Ascending aorta (tissue), 2 donors: ENCODE measurements at regions of chr16 and their contacts with region 1.

Region 1: DNA sequence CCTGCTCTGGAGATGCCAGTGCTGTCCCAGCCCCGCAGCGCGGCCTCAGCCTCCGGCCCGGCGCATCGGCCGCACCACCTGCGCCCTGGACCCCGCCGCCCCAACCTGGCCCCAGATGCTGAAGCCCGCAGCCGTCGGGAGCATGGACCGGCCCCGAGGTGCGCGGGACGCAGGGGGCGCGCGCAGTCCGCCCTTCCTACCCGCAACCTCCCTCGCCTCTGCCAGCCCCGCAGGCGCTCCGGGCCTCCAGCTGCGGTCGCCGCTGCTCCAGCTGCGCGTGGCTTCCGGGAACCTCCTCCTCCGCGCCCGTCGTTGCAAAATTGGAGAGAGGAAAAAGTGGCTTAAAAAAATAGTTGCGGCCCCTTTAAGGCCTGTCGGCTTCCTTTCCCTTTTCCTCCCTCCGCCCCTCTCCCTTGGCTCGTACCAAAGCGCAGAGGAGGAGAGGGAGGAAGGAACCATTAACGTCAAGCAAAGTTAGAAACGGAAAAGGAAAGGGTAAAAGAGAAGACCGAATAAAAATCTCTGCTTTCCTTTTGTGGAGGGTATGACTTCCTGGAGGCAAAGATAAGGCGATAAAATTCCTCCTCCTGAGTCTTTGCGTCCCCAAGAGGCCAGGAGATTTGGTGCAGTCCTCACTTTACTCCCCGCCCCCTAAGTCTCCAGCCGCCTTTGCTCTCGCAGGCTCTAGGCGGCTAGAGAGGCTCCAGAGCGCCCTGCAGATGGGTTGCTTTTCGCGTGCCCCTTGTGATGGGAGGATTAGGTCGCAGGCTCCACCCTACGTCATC is at the start of gene CDIPT:
- DNase-seq: peak; percentile 79 to 97
- H3K4me3 ChIP-seq: peak within 1 kb of the TSS; percentile 72 to 99
- H3K27ac ChIP-seq: peak within 1 kb of the TSS; percentile 85 to 93
- H3K4me1 ChIP-seq: peaks cover 4 to 25% of the 10 kb centered on the region in 2 donors
- H3K27me3 ChIP-seq: no peaks in the 10 kb centered on the region
- CTCF ChIP-seq: peak; percentile 57 to 66 (median 59)
- total RNA-seq, gene CDIPT: 174 TPM

Region 2: DNA sequence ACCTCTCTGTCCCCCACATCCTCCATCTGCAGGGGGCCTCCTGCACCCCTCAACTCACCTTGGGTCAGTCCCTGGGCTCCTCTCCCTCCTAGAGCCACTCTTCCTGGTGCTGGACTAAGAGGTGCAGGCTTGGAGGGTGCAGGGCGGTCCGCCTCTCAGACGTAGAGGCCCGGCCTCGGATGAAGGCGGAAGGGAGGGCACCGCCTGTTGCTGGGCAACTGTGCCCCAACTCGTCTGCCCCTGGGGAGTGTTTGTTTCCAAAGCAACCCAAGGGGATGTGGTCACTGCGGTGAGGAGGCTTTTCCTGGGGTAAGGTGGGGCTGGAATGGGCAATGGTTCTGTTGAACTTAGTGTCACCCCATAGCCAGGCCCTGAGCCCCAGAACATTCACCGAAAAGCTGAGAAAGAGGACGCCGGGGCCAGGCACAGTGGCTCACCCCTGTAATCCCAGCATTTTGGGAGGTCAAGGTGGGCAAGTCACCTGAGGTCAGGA is 117.2 kb before region 1 on chr16 and contains the start of gene C16orf54:
- intact Hi-C with region 1: no loop called
- DNase-seq: peak; percentile 56 to 81
- H3K4me3 ChIP-seq: peak within 1 kb of the TSS in 1 of 2 donors; percentile 55
- H3K27ac ChIP-seq: no peak within 1 kb of the TSS
- H3K4me1 ChIP-seq: no peaks in the 10 kb centered on the region
- H3K27me3 ChIP-seq: no peaks in the 10 kb centered on the region
- CTCF ChIP-seq: no peak
- total RNA-seq, gene C16orf54: 0.21 TPM

Region 3: DNA sequence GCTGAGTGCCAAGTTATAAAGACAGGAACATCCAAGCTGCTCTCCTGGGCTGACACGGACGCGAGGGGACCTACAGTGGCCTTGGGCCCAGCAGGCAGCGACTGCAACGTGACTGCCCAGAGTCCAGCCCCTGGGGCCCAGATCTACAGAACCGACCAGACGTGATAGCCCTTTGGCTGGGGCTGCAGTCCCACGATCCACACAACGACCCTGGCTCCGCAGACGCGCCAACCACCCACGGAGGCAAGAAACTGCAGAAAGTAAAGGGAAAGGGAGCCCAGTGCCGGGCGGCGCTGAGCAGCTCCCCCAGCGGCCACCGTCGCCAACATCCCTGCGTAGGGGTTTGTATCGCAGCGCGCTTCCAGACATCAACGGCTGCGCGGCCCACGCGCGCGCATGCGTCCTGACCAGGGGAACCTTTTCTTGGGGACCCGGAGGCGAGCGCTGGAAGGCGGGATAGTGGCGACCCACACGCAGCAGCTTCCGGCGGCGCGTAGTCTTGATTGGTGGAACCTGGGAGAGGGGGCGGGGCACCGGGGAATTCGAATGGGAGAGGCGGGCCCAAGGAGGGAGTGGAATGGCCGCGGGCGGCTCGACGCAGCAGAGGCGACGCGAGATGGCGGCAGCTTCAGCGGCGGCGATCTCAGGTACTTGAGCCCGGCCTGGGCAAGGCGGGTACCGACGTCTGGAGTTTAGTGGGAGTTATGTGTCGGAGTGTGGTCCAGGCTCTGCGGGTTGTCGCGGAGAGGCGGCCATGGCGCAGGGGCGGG is 72.7 kb before region 1 on chr16 and contains the start of gene KIF22:
- intact Hi-C with region 1: loop called (anchors 2 kb)
- DNase-seq: peak; percentile 94 to 100
- H3K4me3 ChIP-seq: peak within 1 kb of the TSS; percentile 58 to 89
- H3K27ac ChIP-seq: peak within 1 kb of the TSS; percentile 76 to 87
- H3K4me1 ChIP-seq: peaks cover 0 to 17% of the 10 kb centered on the region in 2 donors
- H3K27me3 ChIP-seq: no peaks in the 10 kb centered on the region
- CTCF ChIP-seq: peak; percentile 66 to 84 (median 75)
- total RNA-seq, gene KIF22: 28.6 TPM

Region 4: DNA sequence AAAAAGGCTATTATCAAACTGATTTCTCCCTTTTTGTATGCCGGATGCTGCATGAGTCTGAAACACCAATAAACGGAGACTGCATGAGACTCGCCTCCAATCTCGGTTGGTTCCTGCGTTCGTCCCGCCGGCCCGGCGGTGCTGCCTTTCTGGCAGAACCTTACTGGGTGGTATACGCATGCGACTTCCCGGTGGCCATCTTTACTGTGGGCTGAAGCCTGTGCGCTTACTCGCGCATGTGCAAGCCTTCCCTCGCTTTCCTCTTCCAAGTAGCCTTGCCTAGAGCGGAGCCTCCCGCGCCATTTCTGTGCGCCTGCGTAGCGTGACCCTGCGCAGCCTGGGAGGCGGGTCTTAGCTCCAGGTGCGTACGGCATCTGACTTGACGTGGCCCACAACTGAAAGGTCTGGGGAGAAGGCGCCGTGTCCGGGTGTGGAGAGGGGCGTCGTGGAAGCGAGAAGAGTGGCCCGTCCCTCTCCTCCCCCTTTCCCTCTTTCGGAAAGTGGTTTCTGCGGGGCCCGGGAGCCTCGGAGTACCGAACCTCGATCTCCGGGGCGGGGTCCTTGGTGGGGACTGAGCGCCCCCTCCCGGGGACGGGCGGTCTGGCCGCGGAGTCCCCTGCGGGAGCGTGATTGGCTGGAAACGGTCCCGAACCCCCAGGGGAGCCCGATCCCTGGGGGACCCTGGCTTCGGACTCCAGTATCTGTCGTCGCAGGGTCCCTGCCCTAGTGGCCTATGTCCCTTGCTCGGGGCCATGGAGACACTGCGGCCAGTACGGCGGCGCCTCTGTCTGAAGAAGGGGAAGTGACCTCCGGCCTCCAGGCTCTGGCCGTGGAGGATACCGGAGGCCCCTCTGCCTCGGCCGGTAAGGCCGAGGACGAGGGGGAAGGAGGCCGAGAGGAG is 47.0 kb before region 1 on chr16 and contains the start of gene PAGR1:
- intact Hi-C with region 1: loop called (anchors 1 kb)
- DNase-seq: peak; percentile 96 to 100
- H3K4me3 ChIP-seq: peak within 1 kb of the TSS; percentile 62 to 70
- H3K27ac ChIP-seq: peak within 1 kb of the TSS; percentile 88 to 94
- H3K4me1 ChIP-seq: peaks cover 0 to 39% of the 10 kb centered on the region in 2 donors
- H3K27me3 ChIP-seq: no peaks in the 10 kb centered on the region
- CTCF ChIP-seq: peak; percentile 82 to 91 (median 90)
- total RNA-seq, gene PAGR1: 54.3 TPM

Region 5: DNA sequence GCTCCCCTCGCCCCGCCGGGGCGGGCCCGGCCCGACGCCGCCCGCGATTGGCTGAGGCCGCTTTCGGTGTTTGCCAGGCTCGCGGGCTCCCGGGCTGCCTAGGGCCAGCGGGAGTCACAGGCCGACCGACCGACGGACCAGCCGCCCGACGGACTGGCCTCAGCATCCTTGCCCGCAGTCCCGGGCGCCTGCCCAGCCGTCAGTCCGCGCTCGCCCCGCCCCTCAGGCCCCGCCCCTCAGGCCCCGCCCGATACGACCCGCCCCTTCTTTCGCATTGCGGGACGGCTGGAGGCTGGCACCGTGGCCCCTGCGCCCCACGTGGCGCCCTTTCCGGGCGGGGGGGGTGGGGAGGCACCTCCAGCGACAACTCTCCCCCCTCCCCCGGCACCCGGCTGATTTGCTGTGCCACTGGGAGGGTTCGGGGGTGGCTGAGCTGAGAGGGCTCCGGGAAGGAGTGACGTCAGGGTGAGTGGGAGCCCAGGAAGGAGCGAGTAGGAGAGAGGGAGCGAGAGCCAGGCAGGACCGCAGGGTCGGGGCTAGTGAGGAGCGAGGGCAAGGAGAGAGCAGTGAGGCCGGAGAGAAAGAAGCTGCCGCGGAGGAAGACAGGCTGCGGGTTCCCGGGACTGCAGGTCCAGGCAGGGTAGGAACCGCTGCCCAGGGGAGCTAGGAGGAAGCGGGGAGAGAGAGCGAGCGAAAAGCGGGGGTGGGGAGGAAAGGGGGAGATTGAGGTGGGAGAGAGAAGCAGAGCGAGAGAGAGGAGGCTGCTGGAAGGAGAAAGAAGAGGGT is 37.2 kb after region 1 on chr16 and contains the start of gene ASPHD1:
- intact Hi-C with region 1: loop called (anchors 1 kb)
- DNase-seq: peak; percentile 26 to 81
- H3K4me3 ChIP-seq: peak within 1 kb of the TSS; percentile 57 to 77
- H3K27ac ChIP-seq: no peak within 1 kb of the TSS
- H3K4me1 ChIP-seq: peaks cover 4 to 7% of the 10 kb centered on the region in 2 donors
- H3K27me3 ChIP-seq: peaks cover 4% of the 10 kb centered on the region
- CTCF ChIP-seq: no peak
- total RNA-seq, gene ASPHD1: not detected

Region 6: GRCh38 chr16:29951625-29952365 is 88.7 kb after region 1 on chr16:
- intact Hi-C with region 1: no loop called
- DNase-seq: no peak
- H3K4me3 ChIP-seq: no peak overlapping the region
- H3K27ac ChIP-seq: no peak overlapping the region
- H3K4me1 ChIP-seq: no peaks in the 10 kb centered on the region
- H3K27me3 ChIP-seq: no peaks in the 10 kb centered on the region
- CTCF ChIP-seq: no peak

Region 7: GRCh38 chr16:29973384-29974246 is 110.5 kb after region 1 on chr16 and contains the start of gene TAOK2:
- intact Hi-C with region 1: loop called (anchors 5 kb)
- DNase-seq: peak; percentile 94 to 99
- H3K4me3 ChIP-seq: peak within 1 kb of the TSS; percentile 80 to 93
- H3K27ac ChIP-seq: peak within 1 kb of the TSS; percentile 85 to 90
- H3K4me1 ChIP-seq: peaks cover 12 to 24% of the 10 kb centered on the region in 2 donors
- H3K27me3 ChIP-seq: no peaks in the 10 kb centered on the region
- CTCF ChIP-seq: no peak
- total RNA-seq, gene TAOK2: 101 TPM

Region 8: GRCh38 chr16:30018731-30019158 is 155.7 kb after region 1 on chr16:
- intact Hi-C with region 1: loop called (anchors 2 kb)
- DNase-seq: no peak
- H3K4me3 ChIP-seq: no peak overlapping the region
- H3K27ac ChIP-seq: no peak overlapping the region
- H3K4me1 ChIP-seq: no peaks in the 10 kb centered on the region
- H3K27me3 ChIP-seq: no peaks in the 10 kb centered on the region
- CTCF ChIP-seq: no peak